CD8-positive, alpha-beta T cell (primary cell): ENCODE measurements at regions of chr5 and their contacts with region 1.

Region 1: GRCh38 chr5:126600631-126601511 is at the start of gene PHAX:
- DNase-seq: peak; percentile 47 to 87 (median 70)
- ATAC-seq: peak; percentile 94
- H3K4me3 ChIP-seq: peak within 1 kb of the TSS; percentile 88 to 98
- H3K4me3 Mint-ChIP-seq: peak within 1 kb of the TSS; percentile 98
- H3K27ac ChIP-seq: peak within 1 kb of the TSS; percentile 83 to 85
- H3K27ac Mint-ChIP-seq: peak within 1 kb of the TSS; percentile 96
- H3K4me1 ChIP-seq: peaks cover 29% of the 10 kb centered on the region
- H3K4me1 Mint-ChIP-seq: peaks cover 33% of the 10 kb centered on the region
- H3K27me3 ChIP-seq: no peaks in the 10 kb centered on the region
- H3K27me3 Mint-ChIP-seq: no peaks in the 10 kb centered on the region
- CTCF ChIP-seq: peak; percentile 66
- total RNA-seq, gene PHAX: 29.4 to 32.8 TPM

Region 2: DNA sequence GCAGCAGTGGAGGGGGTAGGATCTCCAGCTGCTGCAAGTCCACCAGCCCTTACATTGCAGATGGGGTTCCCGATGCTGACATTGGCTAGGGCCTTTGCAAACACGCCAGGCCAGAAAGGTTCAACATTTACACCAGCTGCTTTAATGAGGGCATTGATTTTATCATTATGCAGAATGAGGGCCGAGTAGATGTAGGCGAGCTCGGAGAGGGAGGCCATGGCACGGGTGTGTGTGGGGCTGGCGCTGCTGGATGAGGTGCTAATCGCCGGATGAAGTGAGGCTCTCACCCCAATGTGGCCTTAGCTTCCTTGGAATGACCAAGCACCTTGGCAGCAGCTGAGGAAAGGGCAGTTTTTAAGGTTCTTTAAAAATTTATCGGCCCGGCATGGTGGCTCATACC is 27.2 kb after region 1 on chr5:
- CTCF ChIA-PET with region 1: no interaction called
- POLR2A ChIA-PET with region 1: no interaction called
- intact Hi-C with region 1: no loop called
- DNase-seq: no peak
- ATAC-seq: no peak
- H3K4me3 ChIP-seq: no peak overlapping the region
- H3K4me3 Mint-ChIP-seq: no peak overlapping the region
- H3K27ac ChIP-seq: no peak overlapping the region
- H3K27ac Mint-ChIP-seq: no peak overlapping the region
- H3K4me1 ChIP-seq: no peaks in the 10 kb centered on the region
- H3K4me1 Mint-ChIP-seq: no peaks in the 10 kb centered on the region
- H3K27me3 ChIP-seq: no peaks in the 10 kb centered on the region
- H3K27me3 Mint-ChIP-seq: no peaks in the 10 kb centered on the region
- CTCF ChIP-seq: no peak

Region 3: GRCh38 chr5:126846344-126846743 is 245.5 kb after region 1 on chr5:
- CTCF ChIA-PET with region 1: no interaction called
- POLR2A ChIA-PET with region 1: no interaction called
- intact Hi-C with region 1: loop called in 1 of 2 experiments (anchors 5 kb)
- DNase-seq: no peak
- ATAC-seq: no peak
- H3K4me3 ChIP-seq: no peak overlapping the region
- H3K4me3 Mint-ChIP-seq: no peak overlapping the region
- H3K27ac ChIP-seq: peak overlapping the region in 1 of 2 experiments; percentile 63
- H3K27ac Mint-ChIP-seq: peak overlapping the region; percentile 95
- H3K4me1 ChIP-seq: peaks cover 19% of the 10 kb centered on the region
- H3K4me1 Mint-ChIP-seq: peaks cover 51% of the 10 kb centered on the region
- H3K27me3 ChIP-seq: no peaks in the 10 kb centered on the region
- H3K27me3 Mint-ChIP-seq: no peaks in the 10 kb centered on the region
- CTCF ChIP-seq: no peak

Region 4: GRCh38 chr5:127517480-127518318 is 916.8 kb after region 1 on chr5 and contains the start of gene PRRC1:
- CTCF ChIA-PET with region 1: no interaction called
- POLR2A ChIA-PET with region 1: no interaction called
- intact Hi-C with region 1: loop called (anchors 2 to 5 kb)
- DNase-seq: peak; percentile 53 to 90 (median 81)
- ATAC-seq: peak; percentile 96
- H3K4me3 ChIP-seq: peak within 1 kb of the TSS; percentile 91 to 98
- H3K4me3 Mint-ChIP-seq: peak within 1 kb of the TSS; percentile 90
- H3K27ac ChIP-seq: peak within 1 kb of the TSS; percentile 75 to 76
- H3K27ac Mint-ChIP-seq: peak within 1 kb of the TSS; percentile 80
- H3K4me1 ChIP-seq: peaks cover 11% of the 10 kb centered on the region
- H3K4me1 Mint-ChIP-seq: peaks cover 37% of the 10 kb centered on the region
- H3K27me3 ChIP-seq: no peaks in the 10 kb centered on the region
- H3K27me3 Mint-ChIP-seq: peaks cover 8% of the 10 kb centered on the region
- CTCF ChIP-seq: no peak
- total RNA-seq, gene PRRC1: 30.4 to 37.3 TPM